ENCODE measurements at regions of chr4 and their contacts with region 1.

Region 1: DNA sequence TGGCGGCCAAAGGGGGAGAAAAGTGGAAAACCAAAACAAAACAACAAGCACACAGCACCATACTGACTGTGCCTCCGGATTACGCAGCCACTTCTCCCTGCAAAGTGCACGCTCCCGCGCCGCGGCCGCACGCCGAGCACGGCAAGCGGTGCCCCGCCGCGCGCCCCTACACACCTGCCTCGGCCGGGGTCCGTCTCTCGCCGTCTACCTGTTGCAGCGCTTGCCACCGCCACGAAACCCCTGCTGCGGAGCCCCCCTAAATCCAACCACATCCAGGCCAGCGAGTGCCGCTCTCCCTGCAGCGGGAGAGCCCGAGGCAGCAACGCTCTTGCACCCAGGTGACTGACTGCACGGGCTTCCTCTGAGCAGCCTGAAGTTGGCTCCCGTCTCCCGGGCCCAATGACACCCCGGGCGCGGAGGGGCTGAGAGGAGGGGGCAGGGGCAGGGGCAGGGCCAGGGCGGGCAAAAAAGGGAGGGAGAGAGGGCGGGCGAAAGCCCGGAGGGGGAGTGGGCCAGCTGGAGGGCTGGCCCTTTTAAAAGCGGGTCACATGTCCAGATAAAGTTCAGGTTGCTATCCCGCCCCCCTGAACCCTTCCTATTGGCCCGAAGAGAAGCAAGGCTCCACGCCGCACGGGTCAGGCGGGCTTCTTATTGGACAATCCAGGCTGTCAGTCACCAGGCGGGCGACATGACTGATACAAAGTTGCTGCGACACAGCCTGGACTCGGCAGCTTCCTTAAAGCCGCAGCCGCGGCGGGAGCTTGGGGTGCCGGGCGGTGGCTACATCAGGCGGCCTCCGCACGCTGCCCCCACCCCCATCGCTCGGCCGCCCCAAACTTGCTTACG is at the start of gene NR3C2:
- DNase-seq: peak; percentile 92 to 99 (median 97)
- ATAC-seq: peak; percentile 77
- H3K4me3 ChIP-seq: peak within 1 kb of the TSS; percentile 99
- H3K4me3 Mint-ChIP-seq: peak within 1 kb of the TSS; percentile 100
- H3K27ac ChIP-seq: peak within 1 kb of the TSS; percentile 89 to 92
- H3K27ac Mint-ChIP-seq: peak within 1 kb of the TSS; percentile 99
- H3K4me1 ChIP-seq: peaks cover 34% of the 10 kb centered on the region
- H3K4me1 Mint-ChIP-seq: peaks cover 69% of the 10 kb centered on the region
- H3K27me3 ChIP-seq: no peaks in the 10 kb centered on the region
- H3K27me3 Mint-ChIP-seq: peaks cover 8% of the 10 kb centered on the region
- CTCF ChIP-seq: no peak
- total RNA-seq, gene NR3C2: 31.6 to 35.0 TPM

Region 2: DNA sequence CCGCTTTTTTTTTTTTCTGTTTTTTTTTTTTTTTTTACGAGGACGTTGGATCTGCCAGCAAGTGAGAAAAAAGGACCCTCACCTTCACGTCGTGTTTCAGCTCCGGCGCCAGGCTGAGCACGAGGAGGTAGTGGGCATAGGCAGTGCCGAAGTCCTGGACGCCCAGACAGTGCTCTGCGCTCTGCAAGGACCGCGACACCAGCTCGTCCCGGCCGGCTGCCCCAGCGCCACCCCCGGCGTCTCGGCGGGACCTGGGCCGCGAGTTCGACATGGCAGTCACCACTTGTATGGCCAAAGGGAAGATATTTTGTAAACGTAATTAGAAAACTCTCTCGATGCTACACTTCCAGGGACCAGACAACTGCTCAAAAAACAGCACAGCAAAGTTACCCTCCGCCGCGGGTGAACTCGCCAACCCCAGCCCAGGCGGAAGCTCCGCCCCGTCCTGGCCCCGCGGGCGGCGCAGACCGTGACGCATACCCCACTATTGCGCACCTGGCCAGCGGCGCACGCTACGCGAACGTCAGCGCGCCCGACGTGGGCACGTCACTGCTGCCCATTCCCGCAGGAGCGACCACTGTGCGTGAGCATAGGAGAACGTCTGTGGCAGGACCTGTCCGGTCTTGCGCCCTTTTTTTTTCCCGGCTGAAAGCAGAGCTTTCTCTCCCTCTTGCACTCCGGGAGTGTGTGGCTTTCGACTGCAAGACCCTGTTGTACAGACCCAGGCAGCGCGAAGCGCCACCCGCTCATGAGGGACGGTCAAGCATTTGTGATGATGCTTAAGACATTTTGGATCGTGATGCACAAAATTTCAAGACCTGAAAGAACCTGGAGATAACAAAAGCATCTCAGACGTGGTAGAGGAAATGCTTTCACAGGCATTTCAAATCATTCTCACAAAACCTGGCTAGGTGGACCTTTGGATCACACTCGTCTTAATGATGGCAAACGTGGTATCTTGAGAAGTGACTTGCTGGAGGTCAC is 758.2 kb before region 1 on chr4 and contains the start of gene PRMT9:
- CTCF ChIA-PET with region 1: no interaction called
- POLR2A ChIA-PET with region 1: interaction called, 22 read pairs
- intact Hi-C with region 1: loop called in 1 of 2 experiments (anchors 10 kb)
- DNase-seq: peak; percentile 69 to 93 (median 84)
- ATAC-seq: peak; percentile 95
- H3K4me3 ChIP-seq: peak within 1 kb of the TSS; percentile 91
- H3K4me3 Mint-ChIP-seq: peak within 1 kb of the TSS; percentile 98
- H3K27ac ChIP-seq: peak within 1 kb of the TSS; percentile 79 to 93
- H3K27ac Mint-ChIP-seq: peak within 1 kb of the TSS; percentile 100
- H3K4me1 ChIP-seq: peaks cover 12% of the 10 kb centered on the region
- H3K4me1 Mint-ChIP-seq: peaks cover 42% of the 10 kb centered on the region
- H3K27me3 ChIP-seq: no peaks in the 10 kb centered on the region
- H3K27me3 Mint-ChIP-seq: peaks cover 15% of the 10 kb centered on the region
- CTCF ChIP-seq: no peak
- total RNA-seq, gene PRMT9: 21.0 to 21.1 TPM

Region 3: GRCh38 chr4:147981305-147981704 is 460.9 kb before region 1 on chr4:
- CTCF ChIA-PET with region 1: no interaction called
- POLR2A ChIA-PET with region 1: no interaction called
- intact Hi-C with region 1: no loop called
- DNase-seq: no peak
- ATAC-seq: no peak
- H3K4me3 ChIP-seq: no peak overlapping the region
- H3K4me3 Mint-ChIP-seq: no peak overlapping the region
- H3K27ac ChIP-seq: no peak overlapping the region
- H3K27ac Mint-ChIP-seq: no peak overlapping the region
- H3K4me1 ChIP-seq: peaks cover 4% of the 10 kb centered on the region
- H3K4me1 Mint-ChIP-seq: peaks cover 25% of the 10 kb centered on the region
- H3K27me3 ChIP-seq: no peaks in the 10 kb centered on the region
- H3K27me3 Mint-ChIP-seq: no peaks in the 10 kb centered on the region
- CTCF ChIP-seq: no peak

Region 4: GRCh38 chr4:148044912-148045352 is 397.3 kb before region 1 on chr4:
- CTCF ChIA-PET with region 1: no interaction called
- POLR2A ChIA-PET with region 1: interaction called, 13 read pairs
- intact Hi-C with region 1: loop called in 1 of 2 experiments (anchors 5 kb)
- DNase-seq: peak in 3 of 14 experiments; percentile 47 to 55 (median 52)
- ATAC-seq: peak; percentile 46
- H3K4me3 ChIP-seq: no peak overlapping the region
- H3K4me3 Mint-ChIP-seq: no peak overlapping the region
- H3K27ac ChIP-seq: no peak overlapping the region
- H3K27ac Mint-ChIP-seq: no peak overlapping the region
- H3K4me1 ChIP-seq: peaks cover 5% of the 10 kb centered on the region
- H3K4me1 Mint-ChIP-seq: peaks cover 27% of the 10 kb centered on the region
- H3K27me3 ChIP-seq: no peaks in the 10 kb centered on the region
- H3K27me3 Mint-ChIP-seq: no peaks in the 10 kb centered on the region
- CTCF ChIP-seq: peak; percentile 41

Region 5: GRCh38 chr4:148162991-148163390 is 279.2 kb before region 1 on chr4:
- CTCF ChIA-PET with region 1: no interaction called
- POLR2A ChIA-PET with region 1: no interaction called
- intact Hi-C with region 1: no loop called
- DNase-seq: no peak
- ATAC-seq: no peak
- H3K4me3 ChIP-seq: no peak overlapping the region
- H3K4me3 Mint-ChIP-seq: no peak overlapping the region
- H3K27ac ChIP-seq: no peak overlapping the region
- H3K27ac Mint-ChIP-seq: no peak overlapping the region
- H3K4me1 ChIP-seq: no peaks in the 10 kb centered on the region
- H3K4me1 Mint-ChIP-seq: peaks cover 6% of the 10 kb centered on the region
- H3K27me3 ChIP-seq: no peaks in the 10 kb centered on the region
- H3K27me3 Mint-ChIP-seq: no peaks in the 10 kb centered on the region
- CTCF ChIP-seq: no peak

Region 6: DNA sequence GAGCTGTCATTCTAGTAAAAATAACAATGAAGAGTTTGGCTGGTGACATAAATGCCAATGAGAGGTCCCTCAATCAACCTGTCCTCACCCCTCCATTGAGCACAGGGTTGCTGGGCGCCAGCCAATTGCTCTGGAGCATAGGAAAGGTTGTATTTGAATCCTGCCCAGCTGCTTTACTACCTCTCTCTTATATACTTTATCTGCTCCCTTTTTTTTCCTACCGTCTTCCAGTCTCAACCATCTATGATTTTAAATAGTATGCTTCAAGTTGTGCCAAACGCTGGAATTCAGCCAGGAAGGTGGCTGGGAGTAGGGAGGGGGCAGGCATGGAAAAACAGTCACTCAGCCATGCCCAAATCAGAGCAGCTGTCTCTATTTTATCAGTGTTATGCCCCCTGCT is 153.8 kb before region 1 on chr4:
- CTCF ChIA-PET with region 1: no interaction called
- POLR2A ChIA-PET with region 1: interaction called, 3 read pairs
- intact Hi-C with region 1: loop called in 1 of 2 experiments (anchors 10 kb)
- DNase-seq: no peak
- ATAC-seq: no peak
- H3K4me3 ChIP-seq: no peak overlapping the region
- H3K4me3 Mint-ChIP-seq: no peak overlapping the region
- H3K27ac ChIP-seq: no peak overlapping the region
- H3K27ac Mint-ChIP-seq: no peak overlapping the region
- H3K4me1 ChIP-seq: no peaks in the 10 kb centered on the region
- H3K4me1 Mint-ChIP-seq: peaks cover 66% of the 10 kb centered on the region
- H3K27me3 ChIP-seq: no peaks in the 10 kb centered on the region
- H3K27me3 Mint-ChIP-seq: no peaks in the 10 kb centered on the region
- CTCF ChIP-seq: no peak

Region 7: DNA sequence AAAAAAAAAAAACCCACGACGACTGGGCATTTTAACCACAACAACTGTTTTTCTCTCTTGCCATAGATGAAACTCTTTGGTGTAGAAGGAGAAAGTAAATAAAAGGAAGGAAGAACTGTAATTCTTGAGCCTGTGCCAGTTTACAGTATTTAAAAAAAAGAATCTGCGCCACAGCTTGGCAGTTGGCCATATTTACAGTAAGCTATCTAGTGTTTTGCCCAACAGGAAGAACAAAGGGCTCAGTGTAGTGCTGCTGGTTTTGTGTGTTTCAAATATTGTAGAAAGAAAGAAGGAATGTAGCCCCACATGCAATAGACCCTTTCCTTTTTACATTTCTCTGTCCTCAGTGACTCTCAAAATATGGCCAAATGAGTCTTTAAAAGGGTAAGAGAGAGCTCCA is 66.1 kb before region 1 on chr4:
- CTCF ChIA-PET with region 1: no interaction called
- POLR2A ChIA-PET with region 1: interaction called, 111 read pairs
- intact Hi-C with region 1: loop called (anchors 5 kb)
- DNase-seq: peak; percentile 12 to 84 (median 54)
- ATAC-seq: peak; percentile 88
- H3K4me3 ChIP-seq: peak overlapping the region; percentile 31
- H3K4me3 Mint-ChIP-seq: peak overlapping the region; percentile 84
- H3K27ac ChIP-seq: peak overlapping the region in 1 of 2 donors; percentile 59
- H3K27ac Mint-ChIP-seq: peak overlapping the region; percentile 93
- H3K4me1 ChIP-seq: peaks cover 4% of the 10 kb centered on the region
- H3K4me1 Mint-ChIP-seq: peaks cover 52% of the 10 kb centered on the region
- H3K27me3 ChIP-seq: no peaks in the 10 kb centered on the region
- H3K27me3 Mint-ChIP-seq: no peaks in the 10 kb centered on the region
- CTCF ChIP-seq: no peak